Natural killer cell (primary cell): ENCODE measurements at regions of chr4 and their contacts with region 1.

Region 1: GRCh38 chr4:183261953-183262775 is 57.9 kb downstream of the CLDN22 start:
- DNase-seq: peak; percentile 66 to 82
- ATAC-seq: peak; percentile 92 to 97 (median 96)
- H3K4me3 ChIP-seq: no peak overlapping the region
- H3K4me3 Mint-ChIP-seq: no peak overlapping the region
- H3K27ac ChIP-seq: peak overlapping the region; percentile 21
- H3K27ac Mint-ChIP-seq: peak overlapping the region; percentile 58
- H3K4me1 ChIP-seq: no peaks in the 10 kb centered on the region
- H3K4me1 Mint-ChIP-seq: peaks cover 9 to 11% of the 10 kb centered on the region in 2 donors
- H3K27me3 ChIP-seq: no peaks in the 10 kb centered on the region
- H3K27me3 Mint-ChIP-seq: peaks cover 0 to 3% of the 10 kb centered on the region in 2 donors
- CTCF ChIP-seq: peak; percentile 75

Region 2: GRCh38 chr4:182938205-182938645 is 323.9 kb before region 1 on chr4:
- intact Hi-C with region 1: loop called (anchors 1 kb)
- DNase-seq: peak; percentile 53 to 76
- ATAC-seq: peak; percentile 84 to 100 (median 98)
- H3K4me3 ChIP-seq: no peak overlapping the region
- H3K4me3 Mint-ChIP-seq: no peak overlapping the region
- H3K27ac ChIP-seq: no peak overlapping the region
- H3K27ac Mint-ChIP-seq: no peak overlapping the region
- H3K4me1 ChIP-seq: no peaks in the 10 kb centered on the region
- H3K4me1 Mint-ChIP-seq: peaks cover 0 to 6% of the 10 kb centered on the region in 2 donors
- H3K27me3 ChIP-seq: no peaks in the 10 kb centered on the region
- H3K27me3 Mint-ChIP-seq: peaks cover 14 to 32% of the 10 kb centered on the region in 2 donors
- CTCF ChIP-seq: peak; percentile 82

Region 3: DNA sequence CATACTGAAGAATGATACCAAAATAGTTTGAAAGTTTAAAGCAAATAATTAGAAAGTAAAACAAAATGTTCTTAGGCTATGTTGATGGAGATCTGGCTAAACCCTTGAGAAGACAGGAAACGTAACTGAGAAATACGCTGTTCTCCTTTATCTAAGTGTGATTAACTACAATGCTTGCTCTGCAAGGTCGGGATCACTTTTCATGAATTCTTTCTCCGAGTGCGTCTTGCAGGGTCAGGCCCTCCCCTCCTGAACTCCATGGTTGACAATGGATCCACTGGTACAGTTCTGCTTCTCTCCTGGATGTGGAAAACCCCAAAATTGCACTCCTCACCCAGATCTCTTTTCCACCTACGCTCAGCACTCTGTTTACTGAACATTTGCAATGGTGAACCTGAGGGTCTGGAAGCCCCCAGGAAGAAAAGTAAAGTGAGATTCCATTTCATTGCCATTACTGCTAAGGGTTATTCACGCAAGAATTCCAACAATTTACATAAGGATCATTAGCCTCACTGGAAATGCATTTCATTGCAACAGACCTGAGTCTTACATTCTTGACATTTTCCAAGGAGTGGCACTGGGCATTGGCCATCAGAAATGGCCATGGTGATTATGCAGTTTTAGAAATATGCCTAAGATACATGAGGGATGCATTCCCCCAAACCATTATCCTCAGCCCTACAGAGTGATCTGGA is 187.7 kb before region 1 on chr4:
- intact Hi-C with region 1: loop called (anchors 1 kb)
- DNase-seq: no peak
- ATAC-seq: no peak
- H3K4me3 ChIP-seq: no peak overlapping the region
- H3K4me3 Mint-ChIP-seq: no peak overlapping the region
- H3K27ac ChIP-seq: no peak overlapping the region
- H3K27ac Mint-ChIP-seq: no peak overlapping the region
- H3K4me1 ChIP-seq: no peaks in the 10 kb centered on the region
- H3K4me1 Mint-ChIP-seq: no peaks in the 10 kb centered on the region
- H3K27me3 ChIP-seq: no peaks in the 10 kb centered on the region
- H3K27me3 Mint-ChIP-seq: peaks cover 5 to 10% of the 10 kb centered on the region in 2 donors
- CTCF ChIP-seq: no peak

Region 4: DNA sequence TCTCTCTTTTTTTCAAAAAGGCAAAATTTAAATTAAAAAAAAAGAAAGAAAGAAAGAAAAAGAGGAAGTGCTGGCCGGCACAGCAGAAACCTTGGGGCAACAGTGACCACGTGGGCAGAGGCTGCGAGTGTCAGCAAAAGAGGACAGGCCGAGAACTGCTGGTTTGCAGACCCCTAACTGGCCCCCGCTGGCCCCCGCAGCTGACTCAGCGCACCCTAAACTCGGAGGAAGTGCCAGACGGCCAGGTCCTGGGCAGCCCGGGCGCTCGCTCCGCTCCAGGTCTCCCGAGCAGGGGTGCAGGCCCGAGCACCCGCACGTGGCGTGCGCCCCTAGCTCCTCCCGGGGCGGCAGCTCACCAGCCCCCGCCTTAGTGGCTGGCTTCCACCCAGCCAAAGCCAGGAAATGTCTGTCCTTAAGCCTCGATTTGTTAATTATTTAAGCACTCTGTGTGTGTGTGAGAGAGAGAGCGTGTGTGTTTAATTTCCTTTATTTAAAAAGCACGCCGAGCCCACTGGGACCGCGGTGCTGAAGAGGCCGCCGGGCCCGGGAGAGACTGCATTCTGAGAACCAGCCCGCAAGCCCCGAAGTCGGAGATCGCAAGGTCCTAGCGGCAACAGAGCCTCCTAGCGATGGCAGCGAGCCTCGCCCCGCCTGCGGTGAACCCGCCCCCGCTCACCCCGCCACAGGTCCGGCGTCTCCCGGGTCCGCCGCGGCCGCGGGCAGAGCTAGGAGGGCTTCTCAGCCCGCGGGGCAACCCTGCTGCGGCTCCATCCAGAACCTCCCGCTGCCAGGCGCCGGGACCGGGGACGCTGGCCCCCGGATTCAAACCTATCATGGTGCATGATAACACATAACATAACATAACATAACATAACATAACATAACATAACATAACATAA is 136.3 kb after region 1 on chr4:
- intact Hi-C with region 1: no loop called
- DNase-seq: peak; percentile 52 to 79
- ATAC-seq: peak; percentile 83 to 94 (median 92)
- H3K4me3 ChIP-seq: peak overlapping the region; percentile 56
- H3K4me3 Mint-ChIP-seq: peak overlapping the region; percentile 92
- H3K27ac ChIP-seq: peak overlapping the region; percentile 17
- H3K27ac Mint-ChIP-seq: peak overlapping the region in 1 of 2 donors; percentile 86
- H3K4me1 ChIP-seq: peaks cover 15% of the 10 kb centered on the region
- H3K4me1 Mint-ChIP-seq: peaks cover 24 to 28% of the 10 kb centered on the region in 2 donors
- H3K27me3 ChIP-seq: peaks cover 4% of the 10 kb centered on the region
- H3K27me3 Mint-ChIP-seq: peaks cover 30 to 48% of the 10 kb centered on the region in 2 donors
- CTCF ChIP-seq: peak; percentile 37

Region 5: GRCh38 chr4:183471946-183472708 is 210.0 kb after region 1 on chr4:
- intact Hi-C with region 1: no loop called
- DNase-seq: peak; percentile 67 to 87
- ATAC-seq: peak; percentile 69 to 85 (median 73)
- H3K4me3 ChIP-seq: no peak overlapping the region
- H3K4me3 Mint-ChIP-seq: no peak overlapping the region
- H3K27ac ChIP-seq: no peak overlapping the region
- H3K27ac Mint-ChIP-seq: no peak overlapping the region
- H3K4me1 ChIP-seq: no peaks in the 10 kb centered on the region
- H3K4me1 Mint-ChIP-seq: peaks cover 0 to 7% of the 10 kb centered on the region in 2 donors
- H3K27me3 ChIP-seq: no peaks in the 10 kb centered on the region
- H3K27me3 Mint-ChIP-seq: no peaks in the 10 kb centered on the region
- CTCF ChIP-seq: peak; percentile 92